ENCODE measurements at regions of chr11 and their contacts with region 1.

Region 1: DNA sequence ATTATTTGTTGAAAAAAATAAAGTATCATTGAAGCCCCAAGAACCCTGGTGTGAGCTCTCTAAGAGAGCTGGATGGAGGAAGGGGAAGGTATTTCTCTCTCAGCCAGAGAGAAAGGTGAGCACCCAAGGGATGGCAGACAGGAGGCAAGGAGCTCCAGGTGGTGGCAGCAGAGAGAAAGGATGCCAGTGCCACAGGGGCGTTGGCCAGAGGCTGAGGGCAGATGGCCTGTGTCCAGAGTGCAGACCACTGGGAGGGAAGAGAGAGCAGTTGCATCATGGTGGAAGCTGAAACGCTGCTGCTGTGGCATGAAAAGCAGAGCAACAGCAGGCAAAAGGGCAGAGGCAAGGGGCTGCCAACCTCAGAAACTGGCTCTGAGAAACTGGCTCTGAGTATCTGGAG is 8.5 kb downstream of the SPON1 start:
- DNase-seq: no peak
- ATAC-seq: peak; percentile 63
- H3K4me3 ChIP-seq: no peak overlapping the region
- H3K27ac ChIP-seq: no peak overlapping the region
- H3K4me1 ChIP-seq: peaks cover 2% of the 10 kb centered on the region; the same call in 1 of the 2 replicates
- H3K27me3 ChIP-seq: peaks cover 29% of the 10 kb centered on the region
- CTCF ChIP-seq: peak; percentile 40
- POLR2A ChIP-seq: no peak
- RAD21 ChIP-seq: peak; percentile 53

Region 2: DNA sequence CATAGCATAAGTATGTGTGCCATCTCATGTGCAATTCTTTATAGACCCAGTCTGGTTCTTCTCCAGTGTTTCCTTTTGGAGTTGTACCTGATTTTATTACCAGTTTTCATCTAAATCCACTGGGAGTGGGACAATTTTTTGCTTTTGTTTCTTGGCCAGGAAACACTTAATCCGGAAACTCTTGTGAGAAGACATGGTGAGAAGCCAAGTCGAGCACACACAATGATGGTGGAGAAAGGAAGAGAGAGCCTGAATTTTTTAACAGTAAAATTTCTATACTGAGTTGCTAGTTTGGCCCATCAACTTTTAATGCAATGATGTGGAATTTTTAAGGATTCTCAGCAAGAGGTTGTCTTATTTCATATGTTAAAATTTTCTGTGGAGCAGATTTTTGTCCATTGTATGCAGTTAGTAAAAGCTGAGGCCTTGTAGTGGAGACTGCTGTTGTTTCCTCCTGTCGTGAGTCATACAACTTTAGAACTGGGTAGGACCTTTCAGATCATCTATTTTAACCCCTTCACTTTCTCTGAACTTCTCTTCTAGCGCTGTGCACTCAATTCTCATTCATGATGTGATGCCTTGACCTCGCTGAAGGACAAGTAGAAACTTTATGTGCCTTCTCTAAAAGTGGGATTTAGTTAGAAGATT is 285.4 kb before region 1 on chr11:
- CTCF ChIA-PET with region 1: no interaction called
- POLR2A ChIA-PET with region 1: no interaction called
- dilution Hi-C with region 1: no loop called
- in situ Hi-C with region 1: no loop called
- intact Hi-C with region 1: no loop called
- DNase-seq: peak; percentile 15
- ATAC-seq: 0 out of 2 replicates have a peak, but pooled peaks have one; percentile 24
- H3K4me3 ChIP-seq: no peak overlapping the region
- H3K27ac ChIP-seq: no peak overlapping the region
- H3K4me1 ChIP-seq: no peaks in the 10 kb centered on the region; the same call in 1 of the 2 replicates
- H3K27me3 ChIP-seq: no peaks in the 10 kb centered on the region
- CTCF ChIP-seq: no peak
- POLR2A ChIP-seq: no peak
- RAD21 ChIP-seq: no peak

Region 3: GRCh38 chr11:14942745-14943144 is 971.8 kb after region 1 on chr11:
- CTCF ChIA-PET with region 1: no interaction called
- POLR2A ChIA-PET with region 1: no interaction called
- dilution Hi-C with region 1: no loop called
- in situ Hi-C with region 1: no loop called
- intact Hi-C with region 1: loop called (anchors 5 kb)
- DNase-seq: no peak
- ATAC-seq: no peak
- H3K4me3 ChIP-seq: no peak overlapping the region
- H3K27ac ChIP-seq: no peak overlapping the region
- H3K4me1 ChIP-seq: no peaks in the 10 kb centered on the region
- H3K27me3 ChIP-seq: no peaks in the 10 kb centered on the region
- CTCF ChIP-seq: no peak
- POLR2A ChIP-seq: no peak
- RAD21 ChIP-seq: no peak